Heart left ventricle (tissue), 16 donors: ENCODE measurements at regions of chr3 and their contacts with region 1.

Region 1: DNA sequence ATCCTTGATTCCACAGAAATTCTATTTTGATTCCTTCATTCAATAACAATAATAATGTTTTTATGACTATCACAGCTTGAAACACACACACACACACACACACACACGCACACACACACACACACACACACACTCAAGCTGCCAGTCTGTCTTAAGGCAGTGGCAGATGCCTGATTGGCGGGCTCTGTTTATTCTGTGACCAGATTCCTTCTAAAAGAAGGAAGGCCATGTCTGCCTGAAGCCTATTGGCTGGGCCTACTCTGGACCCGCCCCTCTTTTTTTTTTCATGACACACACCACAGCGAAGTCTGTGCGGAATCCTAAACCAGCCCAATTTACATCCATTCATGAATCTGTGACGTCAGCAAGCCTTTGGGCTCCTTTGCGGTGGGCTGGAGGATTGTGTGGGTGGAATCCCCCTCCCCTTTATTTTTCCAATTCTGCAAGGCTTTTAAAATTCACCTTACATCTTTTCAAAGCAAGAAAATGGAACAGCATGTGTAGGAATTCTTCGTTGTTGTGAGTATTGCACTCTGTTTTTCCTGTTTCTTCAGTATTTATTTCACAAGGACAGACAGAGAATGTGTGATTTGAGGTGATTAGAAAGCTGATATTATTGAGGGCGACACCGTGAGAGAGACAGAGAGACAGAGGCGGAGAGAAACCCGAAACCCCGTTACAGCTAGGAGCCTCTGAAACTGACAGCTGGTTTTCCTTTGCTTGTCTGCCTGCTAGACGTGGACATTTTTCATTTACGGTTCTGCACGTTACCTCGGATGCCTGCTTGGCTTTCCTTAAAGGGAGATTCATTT is at the start of gene MAP3K13:
- DNase-seq: peak; percentile 76 to 90 (median 83)
- ATAC-seq: peak; percentile 98 to 100 (median 100)
- H3K4me3 ChIP-seq: peak within 1 kb of the TSS; percentile 49 to 75 (median 62)
- H3K27ac ChIP-seq: peak within 1 kb of the TSS in 9 of 12 donors; percentile 19 to 77 (median 60)
- H3K4me1 ChIP-seq: peaks cover 0 to 11% (median 5%) of the 10 kb centered on the region in 12 donors
- H3K27me3 ChIP-seq: peaks cover 0 to 11% (median 0%) of the 10 kb centered on the region in 9 donors
- CTCF ChIP-seq: no peak
- POLR2A ChIP-seq: no peak
- total RNA-seq, gene MAP3K13: 4.8 to 18.5 (median 11.4) TPM

Region 2: DNA sequence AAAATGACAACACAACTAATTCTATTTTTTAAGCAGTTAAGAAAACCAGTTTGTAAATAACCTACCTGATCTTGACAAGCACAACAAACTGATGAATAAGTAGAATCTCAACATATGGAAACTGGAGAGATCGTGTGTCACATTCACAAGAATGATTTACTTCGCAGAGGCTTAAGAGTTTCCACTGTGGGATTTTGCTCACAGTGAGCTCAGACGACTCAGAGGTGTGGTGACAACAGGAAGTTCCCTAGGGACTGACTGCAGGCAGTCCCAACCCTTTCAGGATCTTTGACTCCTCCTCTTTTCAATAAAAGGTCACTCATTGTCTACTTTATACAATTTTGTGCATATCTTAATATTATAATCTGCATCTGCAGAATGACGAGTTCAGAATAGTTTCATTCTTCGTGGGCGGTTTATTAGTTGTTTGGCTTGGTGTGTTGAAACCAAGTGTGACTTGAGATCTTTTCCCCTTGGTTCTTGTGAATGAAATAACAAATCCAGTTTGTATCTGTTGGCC is 189.4 kb after region 1 on chr3 and contains the start of gene LIPH:
- intact Hi-C with region 1: loop called in 3 of 10 experiments (anchors 10 kb)
- DNase-seq: no peak
- ATAC-seq: no peak
- H3K4me3 ChIP-seq: peak within 1 kb of the TSS in 6 of 12 donors; percentile 11 to 37 (median 32)
- H3K27ac ChIP-seq: peak within 1 kb of the TSS in 1 of 12 donors; percentile 51
- H3K4me1 ChIP-seq: peaks cover 0 to 7% (median 0%) of the 10 kb centered on the region in 12 donors
- H3K27me3 ChIP-seq: no peaks in the 10 kb centered on the region
- CTCF ChIP-seq: no peak
- POLR2A ChIP-seq: no peak
- total RNA-seq, gene LIPH: 0.09 to 1.4 (median 0.48) TPM

Region 3: GRCh38 chr3:185585859-185586685 is 223.0 kb after region 1 on chr3 and contains the start of gene SENP2:
- intact Hi-C with region 1: loop called in 1 of 10 experiments (anchors 5 kb)
- DNase-seq: peak; percentile 99
- ATAC-seq: peak; percentile 98 to 99 (median 98)
- H3K4me3 ChIP-seq: peak within 1 kb of the TSS; percentile 64 to 99 (median 84)
- H3K27ac ChIP-seq: peak within 1 kb of the TSS; percentile 82 to 99 (median 92)
- H3K4me1 ChIP-seq: peaks cover 0 to 38% (median 24%) of the 10 kb centered on the region in 12 donors
- H3K27me3 ChIP-seq: no peaks in the 10 kb centered on the region
- CTCF ChIP-seq: no peak
- POLR2A ChIP-seq: peak; percentile 20 to 78
- total RNA-seq, gene SENP2: 19.3 to 42.4 (median 33.1) TPM

Region 4: GRCh38 chr3:185781759-185782158 is 418.7 kb after region 1 on chr3:
- intact Hi-C with region 1: no loop called
- DNase-seq: no peak
- ATAC-seq: no peak
- H3K4me3 ChIP-seq: no peak overlapping the region
- H3K27ac ChIP-seq: no peak overlapping the region
- H3K4me1 ChIP-seq: peaks cover 0 to 18% (median 3%) of the 10 kb centered on the region in 12 donors
- H3K27me3 ChIP-seq: no peaks in the 10 kb centered on the region
- CTCF ChIP-seq: no peak
- POLR2A ChIP-seq: no peak